ENCODE measurements at regions of chr1 and their contacts with region 1.

Region 1: GRCh38 chr1:27671964-27672749 is at the start of gene IFI6:
- DNase-seq: peak; percentile 95
- H3K4me3 Mint-ChIP-seq: peak within 1 kb of the TSS; percentile 77
- H3K27ac Mint-ChIP-seq: peak within 1 kb of the TSS; percentile 64
- H3K4me1 Mint-ChIP-seq: peaks cover 10% of the 10 kb centered on the region
- H3K27me3 Mint-ChIP-seq: no peaks in the 10 kb centered on the region
- CTCF ChIP-seq: no peak
- total RNA-seq, gene IFI6: 3.8 and 5.8 TPM in 2 replicates

Region 2: GRCh38 chr1:27719286-27720251 is 47.4 kb after region 1 on chr1:
- CTCF ChIA-PET with region 1: interaction called, 7 read pairs
- POLR2A ChIA-PET with region 1: interaction called, 20 read pairs
- intact Hi-C with region 1: loop called (anchors 1 kb)
- DNase-seq: peak; percentile 10
- H3K4me3 Mint-ChIP-seq: no peak overlapping the region
- H3K27ac Mint-ChIP-seq: no peak overlapping the region
- H3K4me1 Mint-ChIP-seq: no peaks in the 10 kb centered on the region
- H3K27me3 Mint-ChIP-seq: peaks cover 53% of the 10 kb centered on the region
- CTCF ChIP-seq: peak; percentile 14

Region 3: DNA sequence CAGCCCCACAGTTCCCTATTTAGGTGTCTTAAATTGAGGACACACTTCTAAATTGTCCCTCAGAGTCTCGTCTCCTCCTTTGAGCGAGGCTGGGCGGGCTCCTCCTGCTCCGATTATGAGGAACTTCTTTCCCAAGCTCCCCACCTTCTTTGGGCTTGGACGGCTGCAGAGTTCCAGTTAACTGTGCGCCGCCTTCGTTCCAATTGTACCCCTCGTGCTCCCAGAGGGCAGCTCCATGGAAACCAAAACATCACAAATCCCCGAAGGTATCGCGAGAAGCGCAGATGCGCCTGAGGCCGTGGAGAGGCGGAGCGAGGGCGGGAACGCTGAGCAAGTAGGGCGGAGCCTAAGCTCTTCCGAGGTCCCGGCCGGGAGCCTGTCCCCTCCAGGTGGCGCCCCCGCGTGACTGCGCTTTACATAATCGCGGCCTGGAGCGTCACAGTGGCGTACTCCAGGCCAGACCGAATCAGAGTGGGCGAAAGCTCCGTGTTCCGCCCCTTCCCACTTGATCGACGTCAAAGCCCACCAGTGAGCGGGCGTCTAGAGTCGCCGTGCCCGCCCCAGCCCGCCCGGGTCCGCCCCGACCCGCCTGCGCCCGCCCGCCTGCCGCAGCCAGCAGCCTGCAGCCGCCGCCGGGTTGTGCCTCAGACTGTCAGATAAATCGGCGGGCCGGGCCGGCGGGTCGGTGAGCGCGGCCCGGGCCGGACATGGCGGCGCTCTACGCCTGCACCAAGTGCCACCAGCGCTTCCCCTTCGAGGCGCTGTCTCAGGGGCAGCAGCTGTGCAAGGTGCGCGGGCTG is 53.4 kb after region 1 on chr1 and contains the start of gene FAM76A:
- CTCF ChIA-PET with region 1: interaction called, 7 read pairs
- POLR2A ChIA-PET with region 1: interaction called, 20 read pairs
- intact Hi-C with region 1: loop called (anchors 2 kb)
- DNase-seq: peak; percentile 98
- H3K4me3 Mint-ChIP-seq: peak within 1 kb of the TSS; percentile 88
- H3K27ac Mint-ChIP-seq: peak within 1 kb of the TSS; percentile 100
- H3K4me1 Mint-ChIP-seq: peaks cover 11% of the 10 kb centered on the region
- H3K27me3 Mint-ChIP-seq: peaks cover 3% of the 10 kb centered on the region
- CTCF ChIP-seq: peak; percentile 23
- total RNA-seq, gene FAM76A: 9.7 and 9.9 TPM in 2 replicates

Measured in MCF 10A (cell line).